OCI-LY7 (cell line): ENCODE measurements at regions of chr11 and their contacts with region 1.

Region 1: DNA sequence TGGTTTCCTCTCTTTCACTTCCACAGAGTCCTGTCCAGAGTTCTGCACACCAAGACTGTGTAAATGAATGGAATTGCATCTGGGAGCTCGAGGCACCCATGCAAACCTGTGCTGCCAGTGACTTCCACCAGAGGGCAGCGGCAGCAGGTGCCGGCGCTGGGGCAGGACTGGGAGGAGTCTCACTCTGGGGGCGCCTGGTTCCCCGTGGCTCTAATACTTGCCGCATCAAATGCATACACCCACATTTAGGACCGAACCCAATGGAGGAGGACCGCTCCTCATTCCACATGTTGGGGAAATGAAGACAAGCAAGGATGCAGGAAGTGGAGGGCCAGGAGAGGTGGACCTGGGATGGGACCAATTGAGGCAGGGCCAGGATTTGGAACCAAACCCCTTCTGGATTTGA is 1.1 kb upstream of the CD6 start:
- DNase-seq: peak; percentile 66
- H3K4me3 ChIP-seq: no peak overlapping the region
- H3K27ac ChIP-seq: no peak overlapping the region
- H3K4me1 ChIP-seq: no peaks in the 10 kb centered on the region
- CTCF ChIP-seq: peak; percentile 97

Region 2: DNA sequence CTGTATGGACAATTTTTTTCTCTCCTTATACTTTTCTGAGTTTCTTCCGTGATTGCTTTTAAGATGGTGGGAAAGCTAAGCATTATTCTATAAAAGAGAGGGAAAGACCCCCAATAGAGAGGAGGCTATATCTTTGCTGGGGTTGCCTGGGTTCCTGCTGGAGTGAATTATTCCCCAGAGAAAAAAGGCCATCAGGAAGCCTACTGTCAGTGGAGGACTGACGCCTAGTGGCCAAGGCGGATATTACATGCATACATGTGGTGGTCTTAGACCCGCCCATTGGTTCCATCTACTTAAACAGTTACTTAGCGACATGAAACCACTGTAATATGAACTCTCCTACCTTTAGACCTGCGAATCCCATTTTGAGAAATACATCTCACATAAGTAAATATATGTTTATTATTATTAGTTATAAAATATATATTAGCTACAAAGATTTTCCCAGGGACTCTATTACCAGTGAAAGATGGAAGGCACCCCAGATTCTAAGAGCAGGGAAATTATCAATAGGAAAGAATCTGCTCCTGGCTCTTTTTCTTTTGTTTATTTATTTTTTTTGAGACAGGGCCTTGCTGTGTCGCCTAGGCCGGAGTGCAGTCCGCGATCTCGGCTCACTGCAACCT is 217.2 kb after region 1 on chr11:
- CTCF ChIA-PET with region 1: no interaction called
- POLR2A ChIA-PET with region 1: no interaction called
- intact Hi-C with region 1: loop called (anchors 2 kb)
- DNase-seq: peak; percentile 85
- H3K4me3 ChIP-seq: no peak overlapping the region
- H3K27ac ChIP-seq: no peak overlapping the region
- H3K4me1 ChIP-seq: no peaks in the 10 kb centered on the region
- CTCF ChIP-seq: peak; percentile 95

Region 3: DNA sequence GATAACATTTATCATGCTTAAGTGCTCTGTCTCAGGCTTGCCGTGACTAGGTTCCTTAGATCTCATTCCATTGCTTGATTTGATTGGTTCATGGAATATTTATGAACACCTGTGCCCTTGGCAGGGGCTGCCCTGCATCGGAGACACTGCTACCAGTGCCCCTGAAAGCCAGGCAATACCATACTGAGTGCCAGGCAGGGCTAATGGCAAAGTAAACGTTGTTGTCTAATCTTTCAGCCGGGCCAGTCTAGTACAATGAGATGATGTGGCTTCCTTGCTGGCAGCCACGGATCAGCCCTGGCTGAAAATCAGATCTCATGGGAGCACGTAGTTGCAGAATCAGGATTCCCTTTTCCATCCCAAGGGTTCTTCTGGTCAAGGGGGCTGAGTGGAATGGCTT is 228.0 kb after region 1 on chr11:
- CTCF ChIA-PET with region 1: no interaction called
- POLR2A ChIA-PET with region 1: no interaction called
- intact Hi-C with region 1: no loop called
- DNase-seq: no peak
- H3K4me3 ChIP-seq: no peak overlapping the region
- H3K27ac ChIP-seq: no peak overlapping the region
- H3K4me1 ChIP-seq: no peaks in the 10 kb centered on the region
- CTCF ChIP-seq: no peak